A549 (cell line): ENCODE measurements at regions of chr12 and their contacts with region 1.

Region 1: DNA sequence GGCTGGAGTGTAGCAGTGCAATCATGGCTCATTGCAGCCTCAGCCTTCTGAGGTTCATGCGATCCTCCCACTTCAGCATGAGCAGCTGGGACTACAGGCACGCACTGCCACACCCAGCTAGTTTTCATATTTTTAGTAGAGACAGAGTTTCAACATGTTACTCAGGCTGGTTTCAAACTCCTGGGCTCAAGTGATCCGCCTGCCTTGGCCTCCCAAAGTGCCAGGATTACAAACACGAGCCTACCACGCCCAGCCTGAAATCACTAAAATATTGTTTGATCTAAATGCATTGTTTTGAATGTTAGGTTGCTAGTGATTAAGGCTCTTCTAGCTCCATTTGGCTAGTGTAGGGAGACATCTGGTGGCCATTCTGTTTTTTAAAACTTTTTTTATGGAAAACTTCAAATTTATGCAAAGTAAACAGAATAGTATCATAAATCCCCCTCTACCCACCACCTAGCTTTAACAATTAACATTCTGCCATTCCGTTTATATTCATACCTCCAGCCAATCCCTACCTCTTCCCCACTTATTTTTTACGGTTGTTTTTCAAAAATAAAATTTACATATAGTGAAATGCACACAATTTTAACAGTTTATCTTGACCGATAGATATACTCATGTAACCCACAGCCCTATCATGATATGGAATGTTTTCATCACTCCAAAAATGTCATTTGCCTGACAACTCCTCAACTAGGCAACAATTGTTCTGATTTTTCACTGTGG is 37.8 kb downstream of the MYO1H start:
- DNase-seq: peak; percentile 51 to 64
- ATAC-seq: peak; percentile 74 to 80
- H3K4me3 ChIP-seq: no peak overlapping the region
- H3K27ac ChIP-seq: peak overlapping the region; percentile 46 to 47; a peak in 1 of 6 replicates
- H3K4me1 ChIP-seq: peaks cover 8% of the 10 kb centered on the region; the same call in 2 of the 3 replicates
- CTCF ChIP-seq: peak; percentile 92
- EP300 ChIP-seq: no peak
- POLR2A ChIP-seq: no peak
- RAD21 ChIP-seq: peak; percentile 94 to 97

Region 2: DNA sequence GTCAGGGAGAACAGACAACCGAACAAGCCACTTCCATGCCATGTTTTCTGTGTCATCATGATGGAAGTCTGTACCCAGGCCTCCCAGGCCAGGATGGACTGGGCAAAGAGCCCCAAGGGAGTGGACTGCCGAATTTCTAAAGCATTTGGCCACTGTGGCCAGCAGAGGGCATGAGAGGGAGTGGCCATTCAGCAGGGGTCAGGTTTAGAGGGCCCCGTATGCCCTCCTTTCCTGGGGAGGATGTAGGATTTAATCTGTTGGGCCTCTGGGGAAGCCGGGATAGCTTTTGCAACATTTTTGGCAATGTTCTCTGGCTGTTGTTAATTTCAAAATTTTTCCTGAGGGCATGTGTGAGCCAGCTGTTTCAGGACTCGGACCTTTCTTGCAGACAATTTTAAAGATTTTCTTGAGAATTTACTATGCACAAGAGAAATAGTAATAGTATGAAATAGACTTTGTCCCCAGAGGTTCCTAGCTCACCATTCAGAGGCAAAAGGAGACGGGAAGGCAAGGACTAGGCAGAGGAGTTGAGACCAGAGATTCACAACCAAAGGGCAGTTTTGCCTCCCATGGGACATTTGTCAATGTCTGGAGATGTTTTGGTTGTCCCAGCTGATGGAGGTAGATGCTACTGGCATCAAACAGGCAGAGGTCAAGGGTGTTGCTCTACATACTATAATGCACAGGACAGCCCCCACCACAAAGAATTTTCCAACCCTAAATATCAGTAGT is 251.2 kb before region 1 on chr12:
- CTCF ChIA-PET with region 1: interaction called, 13 read pairs
- POLR2A ChIA-PET with region 1: no interaction called
- DNase-seq: peak; percentile 42 to 62
- ATAC-seq: peak in 1 of 2 experiments; percentile 85; a peak in 3 of 6 replicates
- H3K4me3 ChIP-seq: no peak overlapping the region
- H3K27ac ChIP-seq: no peak overlapping the region
- H3K4me1 ChIP-seq: no peaks in the 10 kb centered on the region
- CTCF ChIP-seq: peak; percentile 58
- EP300 ChIP-seq: no peak
- POLR2A ChIP-seq: no peak
- RAD21 ChIP-seq: peak; percentile 50 to 59; a peak in 4 of 5 replicates

Region 3: DNA sequence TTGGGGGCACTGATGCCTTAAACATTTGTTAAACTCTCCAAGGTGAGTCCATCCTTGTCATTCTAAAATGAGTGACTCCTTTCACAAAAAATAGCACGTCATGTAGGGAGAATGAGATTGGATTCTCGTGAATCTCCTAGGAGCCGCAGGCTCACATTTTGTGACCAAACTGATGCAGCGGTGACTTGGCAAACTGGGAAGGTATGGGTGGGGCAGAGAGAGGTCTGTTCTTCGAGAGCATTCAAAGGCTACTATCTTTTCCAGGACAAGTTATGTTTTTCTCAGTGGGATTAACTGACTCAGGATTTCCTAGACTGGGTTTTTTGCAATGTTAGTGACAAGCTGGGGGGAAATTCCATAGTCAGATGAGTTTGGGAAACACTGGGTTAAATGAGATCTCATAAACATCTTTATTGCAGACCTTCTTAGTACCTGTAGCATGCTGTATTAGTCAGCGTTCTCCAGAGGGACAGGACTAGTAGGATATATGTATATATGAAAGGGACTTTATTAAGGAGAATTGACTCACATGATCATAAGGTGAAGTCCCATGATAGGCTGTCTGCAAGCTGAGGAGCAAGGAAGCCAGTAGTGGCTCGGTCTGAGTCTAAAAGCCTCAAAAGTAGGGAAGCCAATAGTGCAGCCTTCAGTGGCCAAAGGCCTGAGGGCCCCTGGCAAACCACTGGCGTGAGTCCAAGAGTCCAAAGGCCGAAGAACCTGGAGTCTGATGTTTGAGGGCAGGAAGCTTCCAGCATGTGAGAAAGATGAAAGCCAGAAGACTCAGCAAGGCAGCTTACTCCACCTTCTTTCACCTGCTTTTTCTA is 137.5 kb before region 1 on chr12:
- CTCF ChIA-PET with region 1: interaction called, 10 read pairs
- POLR2A ChIA-PET with region 1: no interaction called
- DNase-seq: peak in 1 of 2 experiments; percentile 49
- ATAC-seq: peak; percentile 43 to 70; a peak in 5 of 6 replicates
- H3K4me3 ChIP-seq: no peak overlapping the region
- H3K27ac ChIP-seq: peak overlapping the region; percentile 7 to 44; a peak in 3 of 6 replicates
- H3K4me1 ChIP-seq: peaks cover 15% of the 10 kb centered on the region
- CTCF ChIP-seq: no peak
- EP300 ChIP-seq: no peak
- POLR2A ChIP-seq: no peak
- RAD21 ChIP-seq: no peak

Region 4: GRCh38 chr12:109475993-109476806 is 90.7 kb after region 1 on chr12:
- CTCF ChIA-PET with region 1: no interaction called
- POLR2A ChIA-PET with region 1: no interaction called
- DNase-seq: no peak
- ATAC-seq: no peak
- H3K4me3 ChIP-seq: peak overlapping the region; percentile 95
- H3K27ac ChIP-seq: peak overlapping the region; percentile 99
- H3K4me1 ChIP-seq: peaks cover 17% of the 10 kb centered on the region; the same call in 2 of the 3 replicates
- CTCF ChIP-seq: no peak
- EP300 ChIP-seq: no peak
- POLR2A ChIP-seq: no peak
- RAD21 ChIP-seq: no peak